Activated naive CD4-positive, alpha-beta T cell treated with anti-CD3 and anti-CD28 coated beads for 36 hours (primary cell): ENCODE measurements at regions of chr10 and their contacts with region 1.

Region 1: DNA sequence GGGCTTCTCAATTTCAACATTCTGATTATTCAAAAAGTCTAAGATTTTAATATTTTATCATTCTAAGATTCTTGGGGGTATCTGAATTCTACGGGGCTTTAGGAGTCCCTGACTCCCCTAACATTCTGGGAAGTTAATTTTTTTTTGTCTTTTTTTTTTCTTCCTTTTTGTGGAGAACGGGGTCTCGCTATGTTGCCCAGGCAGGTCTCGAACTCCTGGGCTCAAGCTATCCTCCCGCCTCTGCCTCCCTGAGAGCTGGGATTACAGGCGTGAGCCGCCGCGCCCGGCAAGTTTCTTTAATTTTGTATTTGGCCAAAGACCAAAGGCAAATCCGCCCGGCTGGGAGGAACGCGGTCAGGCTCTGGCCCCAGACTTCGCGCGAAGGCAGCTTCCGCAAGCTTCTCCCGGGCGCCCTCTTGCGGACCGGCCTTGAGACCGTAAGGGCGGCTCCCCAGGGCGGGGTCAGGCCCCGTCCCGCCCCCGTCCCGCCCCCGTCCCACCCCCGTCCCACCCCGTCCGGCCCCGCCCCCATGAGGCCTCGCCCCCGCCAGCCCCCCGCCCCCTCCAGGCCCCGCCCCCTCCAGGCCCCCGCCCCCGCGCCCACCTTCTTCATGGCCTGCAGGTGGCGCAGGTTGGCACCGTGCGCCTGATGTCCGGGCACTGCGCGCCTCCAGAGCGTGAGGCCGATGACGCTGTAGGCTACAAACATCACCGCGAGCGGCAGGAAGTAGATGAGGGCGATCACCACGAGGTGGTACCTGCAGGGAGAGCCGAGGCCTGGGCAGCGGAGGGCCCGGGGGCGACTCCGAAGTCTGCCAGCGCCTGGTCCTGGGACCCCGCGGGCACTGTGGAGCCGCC is 8.2 kb downstream of the TACR2 start:
- DNase-seq: peak; percentile 93
- H3K4me3 Mint-ChIP-seq: peak overlapping the region; percentile 58
- H3K27ac Mint-ChIP-seq: no peak overlapping the region
- H3K4me1 Mint-ChIP-seq: peaks cover 12% of the 10 kb centered on the region
- H3K27me3 Mint-ChIP-seq: no peaks in the 10 kb centered on the region

Region 2: DNA sequence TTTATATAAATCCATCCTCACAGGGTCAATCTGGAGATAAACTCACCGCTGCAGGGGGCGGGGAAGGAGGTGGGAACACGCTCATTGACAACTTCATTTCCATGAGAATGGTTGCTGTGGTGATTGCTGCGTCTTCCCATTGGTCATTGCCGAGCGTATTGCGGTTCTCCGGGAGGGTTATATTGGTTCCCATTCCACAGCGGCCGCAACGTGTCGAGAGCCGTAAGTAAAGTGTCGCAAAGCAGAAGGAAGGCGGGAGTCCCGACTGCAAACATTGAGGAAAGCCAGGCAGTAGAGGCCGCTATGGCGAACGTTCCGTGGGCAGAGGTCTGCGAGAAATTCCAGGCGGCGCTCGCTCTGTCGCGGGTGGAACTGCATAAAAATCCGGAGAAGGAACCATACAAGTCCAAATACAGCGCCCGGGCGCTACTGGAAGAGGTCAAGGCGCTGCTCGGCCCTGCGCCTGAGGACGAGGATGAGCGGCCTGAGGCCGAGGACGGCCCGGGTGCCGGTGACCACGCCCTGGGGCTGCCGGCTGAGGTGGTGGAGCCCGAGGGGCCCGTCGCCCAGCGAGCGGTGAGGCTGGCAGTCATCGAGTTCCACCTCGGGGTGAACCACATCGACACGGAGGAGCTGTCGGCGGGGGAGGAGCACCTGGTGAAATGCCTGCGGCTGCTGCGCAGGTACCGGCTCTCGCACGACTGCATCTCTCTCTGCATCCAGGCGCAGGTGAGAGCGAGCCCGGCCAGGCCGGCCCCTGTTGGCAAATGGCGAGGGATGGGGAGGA is 419.8 kb before region 1 on chr10 and contains the start of gene KIFBP:
- CTCF ChIA-PET with region 1: no interaction called
- intact Hi-C with region 1: loop called (anchors 2 kb)
- DNase-seq: peak; percentile 94
- H3K4me3 Mint-ChIP-seq: peak within 1 kb of the TSS; percentile 98
- H3K27ac Mint-ChIP-seq: peak within 1 kb of the TSS; percentile 92
- H3K4me1 Mint-ChIP-seq: peaks cover 44% of the 10 kb centered on the region
- H3K27me3 Mint-ChIP-seq: no peaks in the 10 kb centered on the region
- total RNA-seq, gene KIFBP: 10.1 to 10.6 TPM

Region 3: GRCh38 chr10:69237528-69238159 is 170.9 kb before region 1 on chr10:
- CTCF ChIA-PET with region 1: interaction called, 52 read pairs
- intact Hi-C with region 1: loop called (anchors 1 kb)
- DNase-seq: peak; percentile 95
- H3K4me3 Mint-ChIP-seq: no peak overlapping the region
- H3K27ac Mint-ChIP-seq: no peak overlapping the region
- H3K4me1 Mint-ChIP-seq: peaks cover 24% of the 10 kb centered on the region
- H3K27me3 Mint-ChIP-seq: no peaks in the 10 kb centered on the region

Region 4: DNA sequence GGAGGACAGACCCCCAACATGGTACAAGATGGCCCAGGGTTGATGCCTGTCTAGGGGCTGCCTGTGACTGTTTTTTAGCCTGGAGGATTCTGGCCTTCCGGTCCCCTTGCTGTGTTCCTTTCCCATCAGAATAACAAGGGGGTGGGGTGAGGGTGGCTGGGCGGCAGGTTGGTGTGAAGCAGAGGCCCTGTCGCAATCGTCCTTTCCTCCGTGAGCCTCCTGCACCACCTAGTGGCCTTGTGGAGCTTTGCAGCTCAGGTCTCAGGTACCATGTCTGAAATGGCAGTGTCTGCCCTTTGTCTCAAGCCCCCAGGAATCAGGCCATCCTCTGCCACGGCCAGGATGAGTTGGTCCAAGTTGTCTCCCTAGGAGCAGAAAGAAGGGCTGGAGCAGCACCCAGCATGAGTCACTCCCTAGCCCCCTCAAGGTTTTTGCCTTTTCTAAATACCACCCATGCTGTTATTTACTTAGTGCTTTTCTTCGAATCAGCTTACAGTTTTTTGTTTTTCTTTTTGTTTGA is 16.0 kb before region 1 on chr10:
- CTCF ChIA-PET with region 1: interaction called, 17 read pairs
- intact Hi-C with region 1: no loop called
- DNase-seq: peak; percentile 92
- H3K4me3 Mint-ChIP-seq: no peak overlapping the region
- H3K27ac Mint-ChIP-seq: peak overlapping the region; percentile 76
- H3K4me1 Mint-ChIP-seq: peaks cover 23% of the 10 kb centered on the region
- H3K27me3 Mint-ChIP-seq: no peaks in the 10 kb centered on the region

Region 5: GRCh38 chr10:69483963-69484362 is 75.4 kb after region 1 on chr10:
- CTCF ChIA-PET with region 1: no interaction called
- intact Hi-C with region 1: no loop called
- DNase-seq: no peak
- H3K4me3 Mint-ChIP-seq: no peak overlapping the region
- H3K27ac Mint-ChIP-seq: no peak overlapping the region
- H3K4me1 Mint-ChIP-seq: no peaks in the 10 kb centered on the region
- H3K27me3 Mint-ChIP-seq: no peaks in the 10 kb centered on the region

Region 6: DNA sequence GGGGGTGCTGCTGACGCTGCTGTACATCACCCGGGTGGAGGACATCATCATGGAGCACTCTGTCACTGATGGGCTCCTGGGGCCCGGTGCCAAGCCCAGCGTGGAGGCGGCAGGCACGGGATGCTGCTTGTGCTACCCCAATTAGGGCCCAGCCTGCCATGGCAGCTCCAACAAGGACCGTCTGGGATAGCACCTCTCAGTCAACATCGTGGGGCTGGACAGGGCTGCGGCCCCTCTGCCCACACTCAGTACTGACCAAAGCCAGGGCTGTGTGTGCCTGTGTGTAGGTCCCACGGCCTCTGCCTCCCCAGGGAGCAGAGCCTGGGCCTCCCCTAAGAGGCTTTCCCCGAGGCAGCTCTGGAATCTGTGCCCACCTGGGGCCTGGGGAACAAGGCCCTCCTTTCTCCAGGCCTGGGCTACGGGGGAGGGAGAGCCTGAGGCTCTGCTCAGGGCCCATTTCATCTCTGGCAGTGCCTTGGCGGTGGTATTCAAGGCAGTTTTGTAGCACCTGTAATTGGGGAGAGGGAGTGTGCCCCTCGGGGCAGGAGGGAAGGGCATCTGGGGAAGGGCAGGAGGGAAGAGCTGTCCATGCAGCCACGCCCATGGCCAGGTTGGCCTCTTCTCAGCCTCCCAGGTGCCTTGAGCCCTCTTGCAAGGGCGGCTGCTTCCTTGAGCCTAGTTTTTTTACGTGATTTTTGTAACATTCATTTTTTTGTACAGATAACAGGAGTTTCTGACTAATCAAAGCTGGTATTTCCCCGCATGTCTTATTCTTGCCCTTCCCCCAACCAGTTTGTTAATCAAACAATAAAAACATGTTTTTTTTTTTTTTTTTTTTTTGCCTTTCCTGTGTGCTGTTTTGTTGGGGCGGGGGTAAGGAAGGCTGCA is 98.5 kb after region 1 on chr10:
- CTCF ChIA-PET with region 1: interaction called, 30 read pairs
- intact Hi-C with region 1: loop called (anchors 1 kb)
- DNase-seq: no peak
- H3K4me3 Mint-ChIP-seq: peak overlapping the region; percentile 66
- H3K27ac Mint-ChIP-seq: peak overlapping the region; percentile 34
- H3K4me1 Mint-ChIP-seq: peaks cover 10% of the 10 kb centered on the region
- H3K27me3 Mint-ChIP-seq: no peaks in the 10 kb centered on the region

Region 7: GRCh38 chr10:69629897-69630650 is 221.5 kb after region 1 on chr10 and contains the start of gene FAM241B:
- CTCF ChIA-PET with region 1: interaction called, 5 read pairs
- intact Hi-C with region 1: loop called (anchors 2 kb)
- DNase-seq: peak; percentile 85
- H3K4me3 Mint-ChIP-seq: peak within 1 kb of the TSS; percentile 72
- H3K27ac Mint-ChIP-seq: no peak within 1 kb of the TSS
- H3K4me1 Mint-ChIP-seq: peaks cover 5% of the 10 kb centered on the region
- H3K27me3 Mint-ChIP-seq: no peaks in the 10 kb centered on the region
- total RNA-seq, gene FAM241B: 11.1 to 12.3 TPM

Region 8: DNA sequence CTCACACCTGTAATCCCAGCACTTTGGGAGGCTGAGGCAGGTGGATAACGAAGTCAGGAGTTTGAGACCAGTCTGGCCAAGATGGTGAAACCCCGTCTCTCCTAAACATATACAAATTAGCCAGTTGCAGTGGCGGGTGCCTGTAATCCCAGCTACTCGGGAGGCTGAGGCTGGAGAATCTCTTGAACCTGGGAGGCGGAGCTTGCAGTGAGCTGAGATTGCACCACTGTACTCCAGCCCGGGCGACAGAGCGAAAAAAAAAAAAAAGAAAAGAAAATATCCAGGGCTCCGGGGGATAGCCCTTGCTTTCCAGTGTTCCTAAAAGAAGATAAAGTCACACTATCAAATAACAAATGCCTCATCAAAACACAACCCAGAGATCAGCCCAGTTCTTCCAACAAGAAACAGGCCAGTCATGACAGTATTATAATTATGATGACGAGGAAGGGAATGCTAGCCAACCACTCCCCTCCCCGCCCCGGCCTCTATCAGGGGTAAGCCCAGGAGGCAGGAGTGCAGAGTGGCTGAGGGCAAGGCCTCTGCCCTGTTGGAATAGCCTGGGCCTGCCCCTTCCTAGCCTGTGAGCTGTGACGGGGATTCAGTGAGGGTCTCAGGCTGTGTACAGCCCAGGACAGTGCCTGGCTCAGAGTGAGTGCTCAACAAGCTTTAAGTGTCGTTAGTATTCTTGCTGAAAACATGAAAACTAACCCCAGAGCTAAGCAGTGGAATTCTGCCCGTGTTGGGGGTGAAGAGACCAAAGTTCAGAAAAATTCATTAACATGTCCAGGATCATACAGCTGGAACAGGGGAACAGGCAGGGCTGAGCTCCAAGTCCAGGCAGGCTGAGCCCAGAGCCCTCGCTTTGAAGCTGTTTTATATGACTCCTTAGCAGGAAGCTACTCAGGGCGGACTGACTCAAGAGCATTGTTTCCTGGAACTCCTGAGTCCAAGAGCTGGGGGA is 275.8 kb after region 1 on chr10:
- CTCF ChIA-PET with region 1: no interaction called
- intact Hi-C with region 1: no loop called
- DNase-seq: no peak
- H3K4me3 Mint-ChIP-seq: no peak overlapping the region
- H3K27ac Mint-ChIP-seq: no peak overlapping the region
- H3K4me1 Mint-ChIP-seq: no peaks in the 10 kb centered on the region
- H3K27me3 Mint-ChIP-seq: peaks cover 10% of the 10 kb centered on the region